Ascending aorta (tissue), 2 donors: ENCODE measurements at regions of chr3 and their contacts with region 1.

Region 1: GRCh38 chr3:154180836-154181731 is 59.9 kb downstream of the ARHGEF26 start:
- DNase-seq: no peak
- H3K4me3 ChIP-seq: peak overlapping the region in 1 of 2 donors; percentile 30
- H3K27ac ChIP-seq: peak overlapping the region; percentile 76 to 83
- H3K4me1 ChIP-seq: peaks cover 0 to 19% of the 10 kb centered on the region in 2 donors
- H3K27me3 ChIP-seq: no peaks in the 10 kb centered on the region
- CTCF ChIP-seq: no peak

Region 2: GRCh38 chr3:154060238-154061000 is 120.7 kb before region 1 on chr3:
- intact Hi-C with region 1: loop called (anchors 2 kb)
- DNase-seq: peak in 1 of 2 donors; percentile 77
- H3K4me3 ChIP-seq: peak overlapping the region in 1 of 2 donors; percentile 30
- H3K27ac ChIP-seq: peak overlapping the region; percentile 70 to 75
- H3K4me1 ChIP-seq: peaks cover 0 to 10% of the 10 kb centered on the region in 2 donors
- H3K27me3 ChIP-seq: no peaks in the 10 kb centered on the region
- CTCF ChIP-seq: no peak